BJ (cell line): ENCODE measurements at regions of chr11 and their contacts with region 1.

Region 1: GRCh38 chr11:123580557-123581275 is 73.7 kb downstream of the SCN3B start:
- DNase-seq: no peak
- H3K4me3 ChIP-seq: no peak overlapping the region
- H3K27me3 ChIP-seq: no peaks in the 10 kb centered on the region
- CTCF ChIP-seq: peak; percentile 97

Region 2: DNA sequence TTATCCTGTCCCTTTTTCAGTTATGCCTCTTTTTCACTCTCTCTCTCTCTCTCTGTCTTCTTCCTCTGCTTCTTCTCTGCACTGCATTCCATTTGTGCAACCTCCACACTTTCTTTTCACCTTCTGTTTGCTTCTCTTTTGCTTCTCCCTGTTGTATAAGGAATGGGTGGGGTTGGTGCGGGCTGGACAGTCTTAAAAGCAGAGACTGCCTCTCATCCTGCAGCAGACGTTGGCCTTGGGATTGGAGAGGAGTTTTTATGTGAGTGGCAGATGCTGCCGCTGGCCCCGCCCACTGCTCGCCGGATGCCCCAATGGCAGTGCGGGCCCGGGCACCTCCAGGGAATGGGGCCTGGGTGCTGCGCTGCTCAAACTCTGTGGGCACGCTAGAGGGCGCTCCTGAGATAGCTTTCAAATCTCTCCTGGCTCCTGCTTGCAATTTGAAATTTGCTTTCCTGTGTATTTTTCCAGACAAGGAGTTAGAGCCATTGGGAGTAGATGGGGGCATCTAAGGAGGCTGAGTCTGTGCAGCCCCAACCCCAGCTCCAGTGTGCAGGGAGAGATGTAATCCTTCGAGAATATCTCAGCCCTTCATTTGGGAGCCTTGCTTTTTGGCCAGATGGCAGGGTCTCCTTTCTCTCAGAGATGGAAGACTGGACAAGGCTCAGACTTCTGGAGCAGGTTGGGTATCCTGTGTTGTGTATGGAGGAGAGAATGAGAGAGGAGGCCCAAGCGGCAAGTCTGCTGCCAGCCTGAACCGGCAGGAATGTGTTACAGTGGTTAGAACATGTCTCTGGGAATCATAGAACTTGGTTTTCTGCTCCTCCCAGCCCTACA is 69.5 kb before region 1 on chr11:
- CTCF ChIA-PET with region 1: interaction called, 46 read pairs
- POLR2A ChIA-PET with region 1: no interaction called
- DNase-seq: peak; percentile 67
- H3K4me3 ChIP-seq: no peak overlapping the region
- H3K27me3 ChIP-seq: no peaks in the 10 kb centered on the region
- CTCF ChIP-seq: peak; percentile 95

Region 3: DNA sequence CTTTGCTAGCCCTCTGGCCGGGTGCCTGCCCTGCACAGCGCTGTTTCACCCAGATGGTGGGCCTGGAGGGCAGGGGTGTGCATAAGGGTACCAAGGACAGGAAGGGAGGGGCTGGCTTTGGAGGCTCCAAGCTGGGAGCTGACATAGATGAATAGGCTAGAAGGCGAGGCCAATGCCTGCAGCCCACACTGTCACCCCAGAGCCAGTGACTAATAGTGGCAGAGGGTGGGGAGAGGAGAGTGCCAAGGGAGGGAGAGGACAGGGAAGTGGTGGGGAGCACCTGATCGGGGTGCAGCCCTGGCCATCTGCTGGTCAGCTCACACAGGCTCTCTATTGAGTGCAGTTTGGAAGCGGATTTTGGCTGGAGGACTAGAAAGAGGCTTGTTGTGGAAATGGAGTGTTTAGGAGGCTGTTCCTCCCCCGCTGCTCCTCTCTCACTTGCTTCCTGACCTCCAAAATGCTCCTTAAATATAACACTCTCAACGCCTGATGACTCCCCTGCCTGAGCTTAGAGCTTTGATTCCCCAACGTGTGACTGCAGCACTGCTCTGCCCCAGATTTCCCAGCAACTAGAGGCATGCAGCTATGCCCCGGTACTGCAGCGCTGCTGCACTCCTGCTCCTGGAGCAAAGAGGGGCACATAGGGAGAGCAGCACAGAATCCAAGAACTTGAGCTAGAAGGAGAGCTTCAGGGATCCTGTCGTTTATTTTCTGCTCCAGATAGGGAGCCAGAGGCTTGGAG is 61.5 kb before region 1 on chr11:
- CTCF ChIA-PET with region 1: interaction called, 17 read pairs
- POLR2A ChIA-PET with region 1: no interaction called
- DNase-seq: no peak
- H3K4me3 ChIP-seq: no peak overlapping the region
- H3K27me3 ChIP-seq: no peaks in the 10 kb centered on the region
- CTCF ChIP-seq: no peak

Region 4: GRCh38 chr11:123597859-123598258 is 17.1 kb after region 1 on chr11:
- CTCF ChIA-PET with region 1: interaction called, 15 read pairs
- POLR2A ChIA-PET with region 1: no interaction called
- DNase-seq: no peak
- H3K4me3 ChIP-seq: no peak overlapping the region
- H3K27me3 ChIP-seq: no peaks in the 10 kb centered on the region
- CTCF ChIP-seq: no peak